ENCODE measurements at regions of chr5 and their contacts with region 1.

Region 1: DNA sequence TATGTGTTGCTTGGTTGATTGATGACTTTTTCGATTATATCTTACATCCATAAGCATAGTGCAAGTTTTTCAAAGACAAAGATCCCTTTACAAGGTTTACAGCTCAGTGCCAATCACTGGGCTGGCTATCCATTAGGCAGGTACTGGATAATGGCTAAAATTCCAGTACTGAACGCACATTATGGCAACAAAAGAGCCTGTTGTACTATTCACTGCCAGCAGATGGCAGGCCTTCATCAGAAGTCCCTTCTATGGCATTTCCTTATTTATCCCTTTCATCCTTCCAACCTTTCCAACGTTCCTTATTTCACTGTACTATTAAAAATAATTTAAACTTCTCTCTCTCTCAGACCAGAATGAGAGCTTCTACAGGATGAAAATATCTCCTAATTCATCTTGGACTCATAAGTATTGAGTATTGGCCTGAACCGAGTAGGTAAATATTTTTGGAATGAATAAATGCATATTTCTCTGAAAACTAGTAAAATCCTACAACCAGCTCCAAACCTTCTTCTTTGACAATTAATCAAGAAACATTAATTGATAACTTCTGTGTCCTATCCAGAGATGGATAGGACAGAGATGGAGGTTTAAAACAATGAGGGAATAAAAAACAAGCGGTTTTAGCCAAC is 6.7 kb upstream of the WNT8A start:
- DNase-seq: peak; percentile 5 to 69 (median 48)
- ATAC-seq: peak; percentile 51
- H3K4me3 ChIP-seq: no peak overlapping the region
- H3K4me3 Mint-ChIP-seq: no peak overlapping the region
- H3K27ac ChIP-seq: no peak overlapping the region
- H3K27ac Mint-ChIP-seq: no peak overlapping the region
- H3K4me1 ChIP-seq: no peaks in the 10 kb centered on the region
- H3K4me1 Mint-ChIP-seq: peaks cover 8% of the 10 kb centered on the region
- H3K27me3 ChIP-seq: no peaks in the 10 kb centered on the region
- H3K27me3 Mint-ChIP-seq: no peaks in the 10 kb centered on the region
- CTCF ChIP-seq: peak; percentile 92

Region 2: GRCh38 chr5:137778772-137779564 is 298.2 kb before region 1 on chr5:
- CTCF ChIA-PET with region 1: interaction called, 11 read pairs
- POLR2A ChIA-PET with region 1: no interaction called
- intact Hi-C with region 1: no loop called
- DNase-seq: peak in 2 of 9 experiments; percentile 39 to 52
- ATAC-seq: no peak
- H3K4me3 ChIP-seq: no peak overlapping the region
- H3K4me3 Mint-ChIP-seq: no peak overlapping the region
- H3K27ac ChIP-seq: no peak overlapping the region
- H3K27ac Mint-ChIP-seq: no peak overlapping the region
- H3K4me1 ChIP-seq: no peaks in the 10 kb centered on the region
- H3K4me1 Mint-ChIP-seq: no peaks in the 10 kb centered on the region
- H3K27me3 ChIP-seq: no peaks in the 10 kb centered on the region
- H3K27me3 Mint-ChIP-seq: no peaks in the 10 kb centered on the region
- CTCF ChIP-seq: peak; percentile 79

Region 3: GRCh38 chr5:137938751-137939143 is 138.4 kb before region 1 on chr5:
- CTCF ChIA-PET with region 1: no interaction called
- POLR2A ChIA-PET with region 1: no interaction called
- intact Hi-C with region 1: no loop called
- DNase-seq: no peak
- ATAC-seq: no peak
- H3K4me3 ChIP-seq: no peak overlapping the region
- H3K4me3 Mint-ChIP-seq: no peak overlapping the region
- H3K27ac ChIP-seq: no peak overlapping the region
- H3K27ac Mint-ChIP-seq: peak overlapping the region; percentile 63
- H3K4me1 ChIP-seq: no peaks in the 10 kb centered on the region
- H3K4me1 Mint-ChIP-seq: no peaks in the 10 kb centered on the region
- H3K27me3 ChIP-seq: no peaks in the 10 kb centered on the region
- H3K27me3 Mint-ChIP-seq: no peaks in the 10 kb centered on the region
- CTCF ChIP-seq: no peak

Region 4: GRCh38 chr5:138065102-138065501 is 12.1 kb before region 1 on chr5:
- CTCF ChIA-PET with region 1: interaction called, 15 read pairs
- POLR2A ChIA-PET with region 1: no interaction called
- intact Hi-C with region 1: no loop called
- DNase-seq: peak in 3 of 9 experiments; percentile 9 to 14 (median 9)
- ATAC-seq: no peak
- H3K4me3 ChIP-seq: no peak overlapping the region
- H3K4me3 Mint-ChIP-seq: no peak overlapping the region
- H3K27ac ChIP-seq: no peak overlapping the region
- H3K27ac Mint-ChIP-seq: no peak overlapping the region
- H3K4me1 ChIP-seq: no peaks in the 10 kb centered on the region
- H3K4me1 Mint-ChIP-seq: peaks cover 4% of the 10 kb centered on the region
- H3K27me3 ChIP-seq: no peaks in the 10 kb centered on the region
- H3K27me3 Mint-ChIP-seq: no peaks in the 10 kb centered on the region
- CTCF ChIP-seq: no peak

Region 5: GRCh38 chr5:138093036-138093435 is 15.9 kb after region 1 on chr5:
- CTCF ChIA-PET with region 1: interaction called, 57 read pairs
- POLR2A ChIA-PET with region 1: interaction called, 5 read pairs
- intact Hi-C with region 1: no loop called
- DNase-seq: peak in 1 of 9 experiments; percentile 35
- ATAC-seq: peak; percentile 55
- H3K4me3 ChIP-seq: no peak overlapping the region
- H3K4me3 Mint-ChIP-seq: no peak overlapping the region
- H3K27ac ChIP-seq: no peak overlapping the region
- H3K27ac Mint-ChIP-seq: peak overlapping the region; percentile 73
- H3K4me1 ChIP-seq: peaks cover 17% of the 10 kb centered on the region
- H3K4me1 Mint-ChIP-seq: peaks cover 21% of the 10 kb centered on the region
- H3K27me3 ChIP-seq: no peaks in the 10 kb centered on the region
- H3K27me3 Mint-ChIP-seq: peaks cover 2% of the 10 kb centered on the region
- CTCF ChIP-seq: no peak

Region 6: GRCh38 chr5:138128334-138128733 is 51.2 kb after region 1 on chr5:
- CTCF ChIA-PET with region 1: interaction called, 92 read pairs
- POLR2A ChIA-PET with region 1: no interaction called
- intact Hi-C with region 1: loop called (anchors 1 kb)
- DNase-seq: no peak
- ATAC-seq: no peak
- H3K4me3 ChIP-seq: no peak overlapping the region
- H3K4me3 Mint-ChIP-seq: no peak overlapping the region
- H3K27ac ChIP-seq: no peak overlapping the region
- H3K27ac Mint-ChIP-seq: no peak overlapping the region
- H3K4me1 ChIP-seq: no peaks in the 10 kb centered on the region
- H3K4me1 Mint-ChIP-seq: no peaks in the 10 kb centered on the region
- H3K27me3 ChIP-seq: no peaks in the 10 kb centered on the region
- H3K27me3 Mint-ChIP-seq: peaks cover 2% of the 10 kb centered on the region
- CTCF ChIP-seq: no peak

Region 7: GRCh38 chr5:138138949-138139780 is 62.0 kb after region 1 on chr5 and contains the start of gene NME5:
- CTCF ChIA-PET with region 1: interaction called, 92 read pairs
- POLR2A ChIA-PET with region 1: no interaction called
- intact Hi-C with region 1: no loop called
- DNase-seq: no peak
- ATAC-seq: no peak
- H3K4me3 ChIP-seq: no peak within 1 kb of the TSS
- H3K4me3 Mint-ChIP-seq: no peak within 1 kb of the TSS
- H3K27ac ChIP-seq: no peak within 1 kb of the TSS
- H3K27ac Mint-ChIP-seq: no peak within 1 kb of the TSS
- H3K4me1 ChIP-seq: no peaks in the 10 kb centered on the region
- H3K4me1 Mint-ChIP-seq: no peaks in the 10 kb centered on the region
- H3K27me3 ChIP-seq: no peaks in the 10 kb centered on the region
- H3K27me3 Mint-ChIP-seq: peaks cover 26% of the 10 kb centered on the region
- CTCF ChIP-seq: no peak
- total RNA-seq, gene NME5: not detected

Region 8: GRCh38 chr5:138775034-138775433 is 697.9 kb after region 1 on chr5:
- CTCF ChIA-PET with region 1: no interaction called
- POLR2A ChIA-PET with region 1: no interaction called
- intact Hi-C with region 1: no loop called
- DNase-seq: no peak
- ATAC-seq: no peak
- H3K4me3 ChIP-seq: no peak overlapping the region
- H3K4me3 Mint-ChIP-seq: no peak overlapping the region
- H3K27ac ChIP-seq: no peak overlapping the region
- H3K27ac Mint-ChIP-seq: no peak overlapping the region
- H3K4me1 ChIP-seq: no peaks in the 10 kb centered on the region
- H3K4me1 Mint-ChIP-seq: no peaks in the 10 kb centered on the region
- H3K27me3 ChIP-seq: no peaks in the 10 kb centered on the region
- H3K27me3 Mint-ChIP-seq: peaks cover 16% of the 10 kb centered on the region
- CTCF ChIP-seq: no peak

Region 9: DNA sequence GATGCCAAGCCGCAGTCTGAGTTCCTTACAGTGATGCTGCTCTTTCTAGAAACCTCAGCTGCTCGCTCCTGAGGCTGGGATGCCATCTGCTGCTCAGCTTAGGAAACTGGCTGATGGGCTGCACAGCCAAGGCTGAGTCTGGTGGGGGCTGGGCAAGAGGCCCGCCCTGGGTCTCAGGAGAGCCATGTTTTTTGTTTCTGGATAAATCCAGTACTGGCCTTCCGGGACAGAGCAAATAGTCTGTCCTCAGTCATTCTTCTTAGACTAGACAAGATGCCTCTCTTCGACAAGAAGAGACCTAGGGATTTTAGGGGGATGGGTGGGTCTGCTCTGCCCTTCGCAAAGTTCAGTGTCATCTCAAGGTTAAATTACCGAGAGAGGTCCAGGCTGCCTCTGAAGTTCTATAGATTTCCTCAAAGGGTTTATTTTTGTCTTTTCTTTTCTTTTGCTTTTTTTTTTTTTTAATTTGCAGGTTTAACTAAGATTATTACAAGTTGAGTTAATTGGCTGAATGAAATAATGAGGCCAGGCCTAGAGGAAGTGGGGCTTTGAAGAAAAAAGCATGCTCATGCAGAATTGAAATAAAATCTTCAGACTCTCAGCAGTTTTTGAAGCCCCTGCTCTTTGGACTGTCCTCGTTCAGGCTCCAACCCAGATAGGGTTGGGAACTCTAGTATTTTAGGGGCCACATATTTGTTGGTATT is 1185.7 kb after region 1 on chr5:
- CTCF ChIA-PET with region 1: no interaction called
- POLR2A ChIA-PET with region 1: no interaction called
- intact Hi-C with region 1: loop called in 1 of 2 experiments (anchors 5 kb)
- DNase-seq: peak; percentile 37 to 80 (median 65)
- ATAC-seq: peak; percentile 99
- H3K4me3 ChIP-seq: no peak overlapping the region
- H3K4me3 Mint-ChIP-seq: no peak overlapping the region
- H3K27ac ChIP-seq: no peak overlapping the region
- H3K27ac Mint-ChIP-seq: no peak overlapping the region
- H3K4me1 ChIP-seq: peaks cover 13% of the 10 kb centered on the region
- H3K4me1 Mint-ChIP-seq: peaks cover 15% of the 10 kb centered on the region
- H3K27me3 ChIP-seq: no peaks in the 10 kb centered on the region
- H3K27me3 Mint-ChIP-seq: peaks cover 3% of the 10 kb centered on the region
- CTCF ChIP-seq: peak; percentile 56

Measured in CD8-positive, alpha-beta T cell (primary cell).